Endothelial cell of umbilical vein (primary cell): ENCODE measurements at regions of chr11 and their contacts with region 1.

Region 1: GRCh38 chr11:88402192-88402715 is 64.7 kb upstream of the CTSC start:
- DNase-seq: peak; percentile 93
- H3K4me3 ChIP-seq: peak overlapping the region in 1 of 3 experiments; percentile 43
- H3K27ac ChIP-seq: peak overlapping the region; percentile 95
- H3K4me1 ChIP-seq: peaks cover 50% of the 10 kb centered on the region
- H3K27me3 ChIP-seq: no peaks in the 10 kb centered on the region
- CTCF ChIP-seq: no peak
- POLR2A ChIP-seq: no peak

Region 2: GRCh38 chr11:88414385-88414861 is 12.2 kb after region 1 on chr11:
- CTCF ChIA-PET with region 1: interaction called, 6 read pairs
- POLR2A ChIA-PET with region 1: no interaction called
- dilution Hi-C with region 1: no loop called
- intact Hi-C with region 1: loop called (anchors 1 kb)
- DNase-seq: peak; percentile 92
- H3K4me3 ChIP-seq: no peak overlapping the region
- H3K27ac ChIP-seq: no peak overlapping the region
- H3K4me1 ChIP-seq: peaks cover 18% of the 10 kb centered on the region
- H3K27me3 ChIP-seq: no peaks in the 10 kb centered on the region
- CTCF ChIP-seq: no peak
- POLR2A ChIP-seq: no peak

Region 3: GRCh38 chr11:88657076-88657738 is 255.0 kb after region 1 on chr11:
- CTCF ChIA-PET with region 1: no interaction called
- POLR2A ChIA-PET with region 1: no interaction called
- dilution Hi-C with region 1: no loop called
- intact Hi-C with region 1: no loop called
- DNase-seq: no peak
- H3K4me3 ChIP-seq: no peak overlapping the region
- H3K27ac ChIP-seq: no peak overlapping the region
- H3K4me1 ChIP-seq: no peaks in the 10 kb centered on the region
- H3K27me3 ChIP-seq: no peaks in the 10 kb centered on the region
- CTCF ChIP-seq: no peak
- POLR2A ChIP-seq: no peak

Region 4: GRCh38 chr11:89608234-89608966 is 1206.1 kb after region 1 on chr11:
- CTCF ChIA-PET with region 1: no interaction called
- POLR2A ChIA-PET with region 1: no interaction called
- dilution Hi-C with region 1: no loop called
- intact Hi-C with region 1: loop called (anchors 5 kb)
- DNase-seq: peak; percentile 49
- H3K4me3 ChIP-seq: no peak overlapping the region
- H3K27ac ChIP-seq: peak overlapping the region; percentile 99
- H3K4me1 ChIP-seq: peaks cover 14% of the 10 kb centered on the region
- H3K27me3 ChIP-seq: no peaks in the 10 kb centered on the region
- CTCF ChIP-seq: no peak
- POLR2A ChIP-seq: no peak